Activated B cell treated with CpG ODN at 0.5 μM for 24 hours (primary cell): ENCODE measurements at regions of chr3 and their contacts with region 1.

Region 1: DNA sequence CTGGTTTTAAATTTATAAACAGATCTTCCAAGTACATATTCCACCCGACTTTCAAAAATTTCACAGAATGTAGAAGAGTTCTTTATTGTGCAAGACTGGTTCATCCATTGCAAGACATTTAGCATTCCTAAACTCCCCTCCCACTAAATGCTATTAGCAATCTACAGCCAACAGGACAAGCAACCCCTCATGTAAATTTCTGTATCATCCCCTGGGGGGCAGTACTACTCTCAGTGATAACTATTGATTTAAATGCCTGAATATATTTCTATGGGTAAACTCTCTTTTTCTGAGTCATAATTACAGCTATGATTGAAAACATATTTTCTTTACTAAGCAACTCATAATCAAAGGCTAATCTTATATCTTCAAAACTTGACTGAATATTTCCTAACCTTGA is 10.7 kb upstream of the SLC15A2 start:
- DNase-seq: no peak
- ATAC-seq: peak; percentile 42
- H3K4me3 Mint-ChIP-seq: no peak overlapping the region
- H3K27ac Mint-ChIP-seq: no peak overlapping the region
- H3K4me1 Mint-ChIP-seq: peaks cover 12% of the 10 kb centered on the region
- H3K27me3 Mint-ChIP-seq: no peaks in the 10 kb centered on the region
- CTCF ChIP-seq: no peak

Region 2: GRCh38 chr3:121924734-121925133 is 41.2 kb after region 1 on chr3:
- CTCF ChIA-PET with region 1: no interaction called
- POLR2A ChIA-PET with region 1: no interaction called
- intact Hi-C with region 1: no loop called
- DNase-seq: no peak
- ATAC-seq: no peak
- H3K4me3 Mint-ChIP-seq: no peak overlapping the region
- H3K27ac Mint-ChIP-seq: no peak overlapping the region
- H3K4me1 Mint-ChIP-seq: no peaks in the 10 kb centered on the region
- H3K27me3 Mint-ChIP-seq: no peaks in the 10 kb centered on the region
- CTCF ChIP-seq: no peak

Region 3: DNA sequence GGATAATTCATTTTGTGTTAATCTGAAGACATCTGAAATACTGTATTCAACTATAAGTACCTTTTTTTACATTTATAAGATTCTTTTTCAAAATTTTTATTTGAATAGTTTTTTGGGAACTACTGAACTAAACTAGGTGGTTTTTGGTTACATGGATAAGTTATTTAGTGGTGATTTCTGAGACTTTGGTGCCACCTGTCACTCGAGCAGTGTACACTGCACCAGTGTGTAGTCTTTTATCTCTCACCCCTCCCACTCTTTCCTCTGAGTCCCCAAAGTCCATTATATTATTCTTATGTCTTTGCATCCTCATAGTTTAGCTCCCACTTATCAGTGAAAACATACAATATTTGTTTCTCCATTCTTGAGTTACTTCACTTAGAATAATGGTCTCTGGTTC is 229.2 kb after region 1 on chr3:
- CTCF ChIA-PET with region 1: interaction called, 6 read pairs
- POLR2A ChIA-PET with region 1: no interaction called
- intact Hi-C with region 1: loop called (anchors 1 kb)
- DNase-seq: no peak
- ATAC-seq: no peak
- H3K4me3 Mint-ChIP-seq: no peak overlapping the region
- H3K27ac Mint-ChIP-seq: no peak overlapping the region
- H3K4me1 Mint-ChIP-seq: peaks cover 9% of the 10 kb centered on the region
- H3K27me3 Mint-ChIP-seq: no peaks in the 10 kb centered on the region
- CTCF ChIP-seq: no peak